Vagina (tissue), 2 donors: ENCODE measurements at regions of chr4 and their contacts with region 1.

Region 1: GRCh38 chr4:110567214-110567613 is 55.7 kb downstream of the PITX2 start:
- DNase-seq: no peak
- H3K4me3 ChIP-seq: no peak overlapping the region
- H3K27ac ChIP-seq: no peak overlapping the region
- H3K4me1 ChIP-seq: no peaks in the 10 kb centered on the region
- H3K27me3 ChIP-seq: no peaks in the 10 kb centered on the region
- CTCF ChIP-seq: no peak
- POLR2A ChIP-seq: no peak

Region 2: DNA sequence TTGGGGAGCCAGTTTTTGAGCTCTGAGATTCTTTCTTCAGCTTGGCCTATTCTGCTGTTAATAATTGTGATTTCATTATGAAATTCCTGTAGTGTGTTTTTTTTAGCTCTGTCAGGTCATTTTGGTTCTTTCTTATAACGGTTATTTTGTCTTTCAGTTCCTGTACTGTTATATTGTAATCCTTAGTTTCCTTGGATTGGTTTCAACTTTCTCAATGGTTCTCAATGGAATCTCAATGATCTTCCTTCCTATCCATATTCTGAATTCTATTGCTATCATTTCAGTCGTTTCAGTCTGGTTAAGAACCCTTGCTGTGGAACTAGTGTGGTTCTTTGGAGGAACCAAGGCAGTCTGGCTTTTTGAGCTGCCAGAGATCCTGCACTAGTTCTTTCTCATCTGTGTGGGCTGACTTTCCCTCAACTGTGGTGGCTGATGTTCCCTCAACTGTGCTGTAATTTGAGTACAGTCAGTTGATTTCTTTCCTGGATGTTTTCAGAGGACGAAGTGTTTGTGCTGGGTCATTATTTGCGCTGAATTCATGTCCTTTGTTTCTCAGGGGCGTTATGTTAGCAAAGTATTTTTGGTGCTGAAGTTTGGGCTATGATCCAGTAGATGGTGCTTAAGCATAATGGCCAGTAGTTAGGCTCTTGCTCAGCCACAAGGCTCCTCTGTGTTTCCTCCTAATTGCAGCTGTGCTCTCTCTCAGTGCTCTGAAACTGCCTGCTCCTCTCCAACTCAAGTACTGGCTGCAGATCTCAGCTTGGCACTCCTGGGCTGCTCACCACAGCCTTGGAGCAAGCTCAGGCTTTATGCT is 63.7 kb before region 1 on chr4:
- intact Hi-C with region 1: no loop called
- DNase-seq: no peak
- H3K4me3 ChIP-seq: no peak overlapping the region
- H3K27ac ChIP-seq: no peak overlapping the region
- H3K4me1 ChIP-seq: no peaks in the 10 kb centered on the region
- H3K27me3 ChIP-seq: no peaks in the 10 kb centered on the region
- CTCF ChIP-seq: no peak
- POLR2A ChIP-seq: no peak

Region 3: DNA sequence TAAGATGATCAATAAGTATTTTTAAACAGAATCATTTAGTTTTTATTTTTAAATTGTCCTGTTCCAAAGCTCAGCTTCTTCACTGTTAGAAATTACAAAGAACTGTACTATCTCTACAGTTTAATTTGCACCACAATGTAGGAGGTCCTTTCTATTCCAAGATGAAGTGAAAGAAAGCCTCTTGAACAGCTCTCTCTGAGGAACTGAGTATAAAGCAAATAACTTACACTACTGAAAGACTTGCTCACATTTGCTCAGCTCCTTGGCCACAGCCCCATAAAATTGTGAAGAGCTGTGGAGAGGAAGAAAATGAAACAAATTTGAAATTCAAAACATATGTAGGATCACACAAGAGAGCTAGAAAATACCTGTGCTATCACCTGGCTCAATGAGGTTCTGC is 22.6 kb before region 1 on chr4:
- intact Hi-C with region 1: loop called (anchors 2 kb)
- DNase-seq: no peak
- H3K4me3 ChIP-seq: no peak overlapping the region
- H3K27ac ChIP-seq: no peak overlapping the region
- H3K4me1 ChIP-seq: no peaks in the 10 kb centered on the region
- H3K27me3 ChIP-seq: no peaks in the 10 kb centered on the region
- CTCF ChIP-seq: no peak
- POLR2A ChIP-seq: no peak